MCF 10A (cell line): ENCODE measurements at regions of chr13 and their contacts with region 1.

Region 1: DNA sequence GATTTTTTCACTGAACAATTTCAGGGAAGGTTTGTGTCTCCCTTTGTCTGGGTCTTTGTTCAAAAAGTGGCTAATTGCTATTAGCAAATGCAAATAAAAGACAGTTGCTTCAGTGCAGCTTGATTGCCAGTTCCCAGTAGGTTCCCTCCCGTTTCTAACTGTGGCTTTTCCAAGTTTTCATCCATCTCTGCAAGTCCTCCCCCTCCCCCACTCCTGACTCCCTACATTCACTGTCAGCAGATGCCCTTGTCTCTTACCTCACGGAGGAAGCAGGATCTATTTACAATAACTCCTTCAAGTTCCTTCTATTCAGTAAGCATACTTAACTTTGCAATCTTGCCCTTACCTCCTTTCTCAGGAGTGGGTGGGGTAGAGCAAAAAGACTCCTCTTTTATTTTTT is 55.4 kb upstream of the SCEL start:
- DNase-seq: no peak
- H3K4me3 Mint-ChIP-seq: no peak overlapping the region
- H3K27ac Mint-ChIP-seq: no peak overlapping the region
- H3K4me1 Mint-ChIP-seq: peaks cover 5% of the 10 kb centered on the region
- H3K27me3 Mint-ChIP-seq: peaks cover 25% of the 10 kb centered on the region
- CTCF ChIP-seq: no peak

Region 2: DNA sequence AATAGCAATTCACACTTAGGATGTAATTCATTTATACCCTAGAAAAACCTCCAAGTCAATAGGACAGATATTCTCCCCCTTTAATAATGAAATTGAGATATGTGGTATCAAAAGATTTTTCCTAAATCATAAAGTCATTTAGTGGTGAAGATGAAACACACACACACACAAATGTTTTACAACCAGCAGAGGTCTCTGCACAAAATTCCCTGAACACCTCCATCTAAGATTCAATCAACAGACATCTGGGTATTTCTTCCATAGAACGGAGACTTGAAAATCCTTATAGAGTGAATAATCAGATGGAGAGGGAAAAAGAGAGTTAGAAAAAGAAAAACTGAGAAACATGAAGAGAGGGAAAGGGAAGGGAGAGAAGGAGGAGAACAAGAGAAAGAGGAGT is 205.9 kb before region 1 on chr13:
- CTCF ChIA-PET with region 1: interaction called, 3 read pairs
- POLR2A ChIA-PET with region 1: no interaction called
- intact Hi-C with region 1: loop called (anchors 1 kb)
- DNase-seq: no peak
- H3K4me3 Mint-ChIP-seq: no peak overlapping the region
- H3K27ac Mint-ChIP-seq: no peak overlapping the region
- H3K4me1 Mint-ChIP-seq: peaks cover 9% of the 10 kb centered on the region
- H3K27me3 Mint-ChIP-seq: no peaks in the 10 kb centered on the region
- CTCF ChIP-seq: no peak

Region 3: DNA sequence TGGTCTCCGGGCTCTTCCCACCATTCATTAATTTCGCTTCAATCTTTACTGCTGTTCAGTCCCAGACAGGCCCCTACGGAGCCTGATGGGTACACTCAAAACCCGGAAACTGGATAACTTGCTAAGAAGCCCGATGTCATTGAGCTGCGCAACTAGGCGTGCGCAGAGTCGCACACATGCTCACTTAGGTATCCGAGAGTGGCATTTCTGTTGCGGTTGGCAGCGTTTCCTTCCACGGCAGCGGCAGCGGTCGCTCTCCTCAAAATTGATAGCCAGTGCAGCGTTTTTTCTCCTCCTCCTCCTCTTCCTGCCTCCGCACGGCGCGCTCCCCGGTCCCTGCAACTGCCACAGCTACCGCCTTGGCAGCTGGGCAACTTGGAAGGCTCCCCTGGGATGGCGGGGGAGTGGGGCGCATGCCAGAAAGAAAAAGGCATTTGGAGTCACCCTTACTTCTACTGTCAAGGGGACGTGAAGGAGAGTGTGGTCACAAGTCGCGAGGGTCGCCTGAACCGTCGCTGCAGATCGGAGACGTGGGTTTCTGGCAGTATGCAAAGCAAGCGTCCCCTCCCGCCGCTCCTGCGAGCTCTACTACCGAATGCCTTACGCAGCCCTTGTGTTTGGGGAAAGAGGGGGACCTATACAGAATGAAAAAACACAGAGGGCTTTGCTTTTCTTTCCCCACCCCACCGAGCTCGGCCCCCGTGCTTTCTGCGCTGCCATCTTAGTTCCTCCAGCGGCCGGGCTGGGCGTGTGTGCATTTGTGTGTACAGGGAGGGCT is 150.7 kb before region 1 on chr13:
- CTCF ChIA-PET with region 1: interaction called, 12 read pairs
- POLR2A ChIA-PET with region 1: interaction called, 15 read pairs
- intact Hi-C with region 1: loop called (anchors 1 kb)
- DNase-seq: peak; percentile 93
- H3K4me3 Mint-ChIP-seq: peak overlapping the region; percentile 97
- H3K27ac Mint-ChIP-seq: peak overlapping the region; percentile 47
- H3K4me1 Mint-ChIP-seq: peaks cover 11% of the 10 kb centered on the region
- H3K27me3 Mint-ChIP-seq: peaks cover 7% of the 10 kb centered on the region
- CTCF ChIP-seq: no peak

Region 4: GRCh38 chr13:77465603-77466205 is 14.4 kb before region 1 on chr13:
- CTCF ChIA-PET with region 1: interaction called, 11 read pairs
- POLR2A ChIA-PET with region 1: interaction called, 3 read pairs
- intact Hi-C with region 1: no loop called
- DNase-seq: no peak
- H3K4me3 Mint-ChIP-seq: no peak overlapping the region
- H3K27ac Mint-ChIP-seq: no peak overlapping the region
- H3K4me1 Mint-ChIP-seq: no peaks in the 10 kb centered on the region
- H3K27me3 Mint-ChIP-seq: peaks cover 85% of the 10 kb centered on the region
- CTCF ChIP-seq: no peak

Region 5: DNA sequence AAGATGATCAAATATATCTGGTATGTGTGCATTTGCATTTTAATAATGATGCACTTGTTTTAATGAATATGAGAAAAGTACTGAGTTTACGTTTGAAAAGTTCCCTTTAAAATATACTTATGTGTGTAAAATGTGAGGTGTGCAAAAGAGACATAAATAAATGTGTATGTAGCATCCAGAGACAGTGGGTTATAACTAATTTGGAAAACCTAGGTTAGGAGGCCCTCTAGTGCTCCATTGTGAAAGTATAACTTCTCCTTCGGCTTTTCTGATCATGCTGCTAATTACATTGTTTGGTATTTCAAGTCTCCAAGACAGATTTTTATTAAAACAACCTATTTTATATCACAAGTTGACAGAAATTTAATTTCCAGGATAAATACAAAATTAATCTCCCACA is 85.6 kb after region 1 on chr13:
- CTCF ChIA-PET with region 1: interaction called, 11 read pairs
- POLR2A ChIA-PET with region 1: no interaction called
- intact Hi-C with region 1: no loop called
- DNase-seq: peak; percentile 62
- H3K4me3 Mint-ChIP-seq: no peak overlapping the region
- H3K27ac Mint-ChIP-seq: no peak overlapping the region
- H3K4me1 Mint-ChIP-seq: no peaks in the 10 kb centered on the region
- H3K27me3 Mint-ChIP-seq: peaks cover 58% of the 10 kb centered on the region
- CTCF ChIP-seq: peak; percentile 69